PC-3 (cell line): ENCODE measurements at regions of chr14 and their contacts with region 1.

Region 1: DNA sequence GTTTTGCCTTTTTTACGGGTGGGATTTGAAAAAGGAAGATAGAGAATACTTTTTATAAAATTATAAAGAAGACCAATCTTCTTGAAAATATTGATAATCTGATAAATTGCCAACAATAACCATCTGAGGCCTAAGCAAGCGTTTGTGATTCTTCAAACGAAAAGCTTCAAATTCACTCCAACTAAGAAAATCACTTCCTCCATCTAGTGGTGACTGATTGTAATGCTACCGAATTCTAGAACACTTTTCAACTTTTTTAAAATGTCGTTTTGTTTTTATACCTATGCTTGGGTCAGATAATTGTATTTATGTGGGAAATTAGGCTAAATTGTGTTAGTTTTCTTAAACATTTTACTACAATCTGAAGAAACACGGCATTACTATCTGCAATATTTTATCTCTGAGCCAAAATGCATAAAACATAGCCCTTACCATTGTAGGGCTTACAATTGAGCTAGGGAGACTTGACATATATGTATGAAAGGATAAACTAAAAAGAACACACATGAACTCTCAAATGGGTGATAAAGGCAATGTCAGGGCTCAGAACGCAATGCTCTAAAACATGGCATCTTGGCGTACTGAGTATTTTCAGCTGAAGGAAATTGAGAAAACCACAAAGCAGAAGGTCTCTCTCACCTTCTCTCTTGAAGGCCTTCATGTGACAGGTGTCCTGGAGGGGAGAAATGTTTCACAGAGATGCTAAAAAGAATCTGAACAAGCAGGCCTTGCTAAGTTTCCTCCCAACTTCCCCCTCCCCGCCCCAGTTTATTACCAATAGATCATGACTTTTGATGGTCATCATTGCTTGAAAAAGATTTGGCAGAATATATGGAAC is 36.8 kb upstream of the G2E3 start:
- DNase-seq: peak; percentile 67
- ATAC-seq: peak; percentile 43; the same call in 1 of the 2 replicates
- H3K4me3 ChIP-seq: no peak overlapping the region
- H3K27ac ChIP-seq: no peak overlapping the region
- H3K4me1 ChIP-seq: no peaks in the 10 kb centered on the region
- H3K27me3 ChIP-seq: no peaks in the 10 kb centered on the region
- CTCF ChIP-seq: peak; percentile 84

Region 2: DNA sequence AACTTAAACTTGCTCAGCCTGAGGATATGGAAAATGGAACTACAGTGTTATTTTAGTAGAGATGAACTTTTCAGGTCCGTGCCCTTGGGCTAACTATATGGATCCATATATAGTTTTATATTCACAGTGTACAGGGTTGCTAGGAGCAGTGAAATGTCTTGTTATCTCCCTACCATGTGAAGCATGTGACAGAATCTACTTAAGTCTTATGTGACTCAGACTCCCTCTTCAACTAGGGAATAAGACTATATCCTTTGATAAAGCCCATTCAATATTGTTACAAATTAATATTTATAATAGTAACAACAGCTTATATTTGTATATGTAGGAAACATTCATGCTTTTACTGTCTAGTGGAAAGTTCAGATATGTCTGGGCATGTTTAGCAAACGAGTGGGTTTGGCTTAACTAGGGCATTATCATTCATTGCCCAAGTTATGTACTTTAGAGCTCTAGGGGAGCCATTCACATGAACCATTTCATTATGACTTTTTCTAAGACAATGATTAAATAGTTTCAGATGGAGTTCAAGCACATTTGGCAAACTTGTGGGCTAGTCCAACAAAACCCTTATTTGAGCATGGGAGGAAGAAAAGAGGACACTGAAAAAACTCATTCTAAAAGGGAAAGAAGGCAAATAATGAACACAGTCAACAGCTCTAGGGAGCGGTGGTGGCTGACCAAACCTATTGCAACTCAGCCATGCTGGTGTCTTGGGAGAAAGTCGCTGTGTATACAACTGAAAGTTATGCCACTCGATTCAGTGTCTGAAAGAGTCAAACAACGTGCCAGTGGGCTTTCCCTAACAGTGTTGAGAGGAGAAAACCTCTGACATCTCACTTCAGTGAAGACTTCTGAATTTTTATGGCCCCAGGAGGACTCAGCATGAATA is 269.1 kb before region 1 on chr14:
- CTCF ChIA-PET with region 1: no interaction called
- POLR2A ChIA-PET with region 1: no interaction called
- intact Hi-C with region 1: loop called (anchors 10 kb)
- DNase-seq: no peak
- ATAC-seq: no peak
- H3K4me3 ChIP-seq: no peak overlapping the region
- H3K27ac ChIP-seq: no peak overlapping the region
- H3K4me1 ChIP-seq: peaks cover 4% of the 10 kb centered on the region; the same call in 1 of the 2 replicates
- H3K27me3 ChIP-seq: no peaks in the 10 kb centered on the region
- CTCF ChIP-seq: no peak

Region 3: GRCh38 chr14:30375296-30375892 is 146.7 kb before region 1 on chr14:
- CTCF ChIA-PET with region 1: no interaction called
- POLR2A ChIA-PET with region 1: no interaction called
- intact Hi-C with region 1: loop called (anchors 1 kb)
- DNase-seq: peak; percentile 78
- ATAC-seq: peak; percentile 99
- H3K4me3 ChIP-seq: no peak overlapping the region
- H3K27ac ChIP-seq: no peak overlapping the region
- H3K4me1 ChIP-seq: no peaks in the 10 kb centered on the region
- H3K27me3 ChIP-seq: peaks cover 22% of the 10 kb centered on the region
- CTCF ChIP-seq: peak; percentile 88

Region 4: GRCh38 chr14:30719137-30719536 is 197.0 kb after region 1 on chr14:
- CTCF ChIA-PET with region 1: no interaction called
- POLR2A ChIA-PET with region 1: no interaction called
- intact Hi-C with region 1: no loop called
- DNase-seq: no peak
- ATAC-seq: no peak
- H3K4me3 ChIP-seq: no peak overlapping the region
- H3K27ac ChIP-seq: no peak overlapping the region
- H3K4me1 ChIP-seq: no peaks in the 10 kb centered on the region
- H3K27me3 ChIP-seq: no peaks in the 10 kb centered on the region
- CTCF ChIP-seq: no peak

Region 5: GRCh38 chr14:30756596-30756995 is 234.5 kb after region 1 on chr14:
- CTCF ChIA-PET with region 1: no interaction called
- POLR2A ChIA-PET with region 1: no interaction called
- intact Hi-C with region 1: no loop called
- DNase-seq: no peak
- ATAC-seq: peak; percentile 41; the same call in 1 of the 2 replicates
- H3K4me3 ChIP-seq: no peak overlapping the region
- H3K27ac ChIP-seq: no peak overlapping the region
- H3K4me1 ChIP-seq: no peaks in the 10 kb centered on the region
- H3K27me3 ChIP-seq: peaks cover 7% of the 10 kb centered on the region; the same call in 1 of the 2 replicates
- CTCF ChIP-seq: 0 out of 2 replicates have a peak, but pooled peaks have one; percentile 13